ENCODE measurements at regions of chr5 and their contacts with region 1.

Region 1: GRCh38 chr5:68215208-68215897 is at the start of gene PIK3R1:
- DNase-seq: peak; percentile 84 to 96 (median 91)
- ATAC-seq: peak; percentile 78
- H3K4me3 ChIP-seq: peak within 1 kb of the TSS; percentile 81 to 93
- H3K4me3 Mint-ChIP-seq: peak within 1 kb of the TSS; percentile 87
- H3K27ac ChIP-seq: peak within 1 kb of the TSS; percentile 83 to 94
- H3K27ac Mint-ChIP-seq: peak within 1 kb of the TSS; percentile 96
- H3K4me1 ChIP-seq: peaks cover 35% of the 10 kb centered on the region
- H3K4me1 Mint-ChIP-seq: peaks cover 46% of the 10 kb centered on the region
- H3K27me3 ChIP-seq: no peaks in the 10 kb centered on the region
- H3K27me3 Mint-ChIP-seq: no peaks in the 10 kb centered on the region
- CTCF ChIP-seq: no peak
- total RNA-seq, gene PIK3R1: 461 to 470 TPM

Region 2: GRCh38 chr5:67003935-67004729 is 1211.2 kb before region 1 on chr5:
- CTCF ChIA-PET with region 1: no interaction called
- POLR2A ChIA-PET with region 1: interaction called, 7 read pairs
- intact Hi-C with region 1: loop called (anchors 1 to 5 kb)
- DNase-seq: peak; percentile 70 to 93 (median 87)
- ATAC-seq: peak; percentile 78
- H3K4me3 ChIP-seq: peak overlapping the region; percentile 75 to 85
- H3K4me3 Mint-ChIP-seq: peak overlapping the region; percentile 95
- H3K27ac ChIP-seq: peak overlapping the region; percentile 59 to 75
- H3K27ac Mint-ChIP-seq: peak overlapping the region; percentile 98
- H3K4me1 ChIP-seq: peaks cover 36% of the 10 kb centered on the region
- H3K4me1 Mint-ChIP-seq: peaks cover 52% of the 10 kb centered on the region
- H3K27me3 ChIP-seq: no peaks in the 10 kb centered on the region
- H3K27me3 Mint-ChIP-seq: no peaks in the 10 kb centered on the region
- CTCF ChIP-seq: no peak

Region 3: DNA sequence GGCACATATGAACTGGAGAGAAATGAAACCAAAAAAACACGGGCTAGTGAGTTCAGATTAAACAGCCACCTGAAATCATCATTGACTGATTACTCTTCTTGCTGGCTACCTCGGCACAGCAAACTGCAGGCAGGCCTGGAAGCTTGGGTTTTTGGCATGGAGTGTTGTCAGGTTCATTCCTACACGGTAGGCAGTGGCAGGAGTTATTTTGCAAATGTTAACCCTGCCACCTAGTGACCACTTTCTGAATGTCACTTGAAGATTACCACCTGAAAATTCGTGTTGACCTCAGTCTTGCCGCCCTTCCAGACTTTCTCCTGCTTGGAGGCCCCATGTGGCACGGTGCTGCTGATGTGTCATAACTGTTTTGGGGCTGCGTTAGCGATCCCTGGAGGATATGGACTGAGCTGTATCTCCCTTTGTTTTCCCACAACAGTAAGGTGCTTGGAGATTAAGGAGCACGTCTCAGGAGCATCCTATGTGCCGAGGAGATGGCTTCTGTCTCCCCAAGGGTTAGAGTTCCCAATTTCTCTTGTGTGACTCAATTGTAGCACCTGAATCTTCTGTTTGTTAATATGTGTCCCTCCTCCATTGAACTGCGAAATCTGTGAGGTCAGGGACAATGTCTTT is 1006.1 kb before region 1 on chr5:
- CTCF ChIA-PET with region 1: no interaction called
- POLR2A ChIA-PET with region 1: interaction called, 5 read pairs
- intact Hi-C with region 1: loop called in 1 of 2 experiments (anchors 5 kb)
- DNase-seq: peak; percentile 12 to 84 (median 61)
- ATAC-seq: peak; percentile 51
- H3K4me3 ChIP-seq: no peak overlapping the region
- H3K4me3 Mint-ChIP-seq: peak overlapping the region; percentile 13
- H3K27ac ChIP-seq: no peak overlapping the region
- H3K27ac Mint-ChIP-seq: peak overlapping the region; percentile 86
- H3K4me1 ChIP-seq: peaks cover 49% of the 10 kb centered on the region
- H3K4me1 Mint-ChIP-seq: peaks cover 58% of the 10 kb centered on the region
- H3K27me3 ChIP-seq: no peaks in the 10 kb centered on the region
- H3K27me3 Mint-ChIP-seq: no peaks in the 10 kb centered on the region
- CTCF ChIP-seq: peak; percentile 81

Region 4: DNA sequence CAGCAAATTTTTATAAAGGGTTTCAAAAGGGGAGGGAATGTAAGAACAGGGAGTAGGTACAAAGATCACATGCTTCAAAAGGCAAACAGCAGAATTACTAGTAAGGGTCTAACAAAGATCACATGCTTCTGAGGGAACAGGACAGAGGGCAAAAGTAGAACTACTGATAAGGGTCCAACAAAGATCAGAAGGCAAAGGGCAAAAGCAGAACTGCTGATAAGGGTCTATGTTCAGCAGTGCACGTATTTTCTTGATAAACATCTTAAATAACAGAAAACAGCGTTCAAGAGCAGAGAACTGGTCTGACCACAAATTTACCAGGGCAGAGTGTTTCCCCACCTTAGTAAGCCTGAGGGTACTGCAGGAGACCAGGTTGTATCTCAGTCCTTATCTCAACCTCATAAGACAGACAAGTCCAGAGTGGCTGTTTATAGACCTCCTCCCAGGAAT is 469.2 kb before region 1 on chr5:
- CTCF ChIA-PET with region 1: no interaction called
- POLR2A ChIA-PET with region 1: no interaction called
- intact Hi-C with region 1: no loop called
- DNase-seq: no peak
- ATAC-seq: no peak
- H3K4me3 ChIP-seq: no peak overlapping the region
- H3K4me3 Mint-ChIP-seq: no peak overlapping the region
- H3K27ac ChIP-seq: no peak overlapping the region
- H3K27ac Mint-ChIP-seq: no peak overlapping the region
- H3K4me1 ChIP-seq: no peaks in the 10 kb centered on the region
- H3K4me1 Mint-ChIP-seq: no peaks in the 10 kb centered on the region
- H3K27me3 ChIP-seq: no peaks in the 10 kb centered on the region
- H3K27me3 Mint-ChIP-seq: no peaks in the 10 kb centered on the region
- CTCF ChIP-seq: no peak

Region 5: GRCh38 chr5:68279984-68280383 is 64.6 kb after region 1 on chr5:
- CTCF ChIA-PET with region 1: interaction called, 3 read pairs
- POLR2A ChIA-PET with region 1: interaction called, 8 read pairs
- intact Hi-C with region 1: loop called (anchors 2 to 5 kb)
- DNase-seq: peak in 6 of 9 experiments; percentile 30 to 91 (median 56)
- ATAC-seq: peak; percentile 89
- H3K4me3 ChIP-seq: peak overlapping the region; percentile 56
- H3K4me3 Mint-ChIP-seq: peak overlapping the region; percentile 86
- H3K27ac ChIP-seq: peak overlapping the region; percentile 68 to 74
- H3K27ac Mint-ChIP-seq: peak overlapping the region; percentile 95
- H3K4me1 ChIP-seq: peaks cover 59% of the 10 kb centered on the region
- H3K4me1 Mint-ChIP-seq: peaks cover 84% of the 10 kb centered on the region
- H3K27me3 ChIP-seq: no peaks in the 10 kb centered on the region
- H3K27me3 Mint-ChIP-seq: no peaks in the 10 kb centered on the region
- CTCF ChIP-seq: no peak

Region 6: DNA sequence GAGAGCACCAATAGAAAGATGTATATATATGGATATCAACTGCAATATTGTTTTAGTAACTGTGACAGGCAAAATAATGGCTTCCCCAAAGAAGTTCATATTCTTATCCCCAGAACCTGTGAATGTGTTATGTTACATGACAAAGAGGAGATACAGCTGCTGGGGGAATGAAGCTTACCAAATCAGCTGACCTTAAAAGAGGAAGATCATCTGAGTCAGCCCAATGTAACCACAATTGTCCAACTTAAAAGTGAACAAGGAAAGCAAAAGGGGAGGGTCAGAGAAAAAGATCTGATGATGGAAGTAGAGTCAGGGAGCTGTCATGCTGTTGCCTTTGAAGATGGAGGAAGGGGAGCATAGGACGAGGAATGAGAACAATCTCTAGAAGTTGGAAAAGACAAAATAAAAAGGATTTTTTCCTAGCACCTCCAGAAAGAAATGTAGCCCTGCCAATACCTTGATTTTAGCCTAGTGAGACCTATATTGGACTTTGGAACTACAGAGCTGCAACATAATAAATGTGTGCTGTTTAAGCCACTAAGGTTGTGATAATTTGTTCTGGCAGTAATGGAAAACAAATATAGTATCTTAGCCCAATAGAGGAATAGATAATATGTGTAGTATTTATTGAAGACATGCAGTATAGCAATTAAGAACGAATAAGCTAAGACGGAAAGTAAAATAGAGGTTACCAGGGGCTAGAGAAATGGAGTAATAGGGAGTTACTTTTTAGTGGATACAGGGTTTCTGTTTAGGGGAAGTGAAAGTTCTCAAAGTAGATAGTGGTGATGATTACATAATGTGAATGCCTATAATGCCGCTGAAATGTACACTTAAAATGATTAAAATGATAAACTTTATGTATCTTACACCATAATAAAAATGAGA is 116.1 kb after region 1 on chr5:
- CTCF ChIA-PET with region 1: no interaction called
- POLR2A ChIA-PET with region 1: no interaction called
- intact Hi-C with region 1: no loop called
- DNase-seq: peak in 1 of 9 experiments; percentile 23
- ATAC-seq: no peak
- H3K4me3 ChIP-seq: no peak overlapping the region
- H3K4me3 Mint-ChIP-seq: no peak overlapping the region
- H3K27ac ChIP-seq: no peak overlapping the region
- H3K27ac Mint-ChIP-seq: no peak overlapping the region
- H3K4me1 ChIP-seq: no peaks in the 10 kb centered on the region
- H3K4me1 Mint-ChIP-seq: no peaks in the 10 kb centered on the region
- H3K27me3 ChIP-seq: no peaks in the 10 kb centered on the region
- H3K27me3 Mint-ChIP-seq: no peaks in the 10 kb centered on the region
- CTCF ChIP-seq: no peak

Region 7: DNA sequence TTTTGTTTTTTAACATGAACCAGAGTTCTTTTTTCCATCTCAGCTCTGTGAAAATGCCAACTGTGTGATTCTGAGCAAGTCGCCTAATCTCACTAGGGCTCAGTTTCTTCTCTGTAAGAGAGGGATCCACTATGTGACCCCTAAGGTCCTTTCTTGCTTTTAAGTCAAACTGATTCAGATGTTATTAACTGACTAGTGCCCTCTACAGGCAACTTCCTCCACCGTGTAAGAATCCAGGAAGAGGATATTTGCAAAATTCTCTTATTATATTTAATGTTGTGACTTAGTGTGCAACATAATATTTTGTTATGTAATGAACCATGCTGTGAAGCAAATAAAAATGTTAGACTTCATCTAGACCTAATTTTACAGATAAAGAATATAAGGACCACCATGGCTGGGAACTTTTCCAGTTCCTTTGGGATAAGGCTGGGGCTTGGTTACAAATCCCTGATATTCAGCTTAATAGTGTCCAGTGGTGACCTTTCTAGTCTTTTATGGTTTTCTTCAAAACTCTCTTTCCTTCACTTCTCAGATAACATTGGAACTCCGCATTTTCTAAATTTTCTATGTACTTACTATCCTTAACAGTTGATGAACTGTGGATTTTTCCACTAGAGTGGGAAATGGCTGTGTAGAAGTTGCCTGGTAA is 244.9 kb after region 1 on chr5:
- CTCF ChIA-PET with region 1: no interaction called
- POLR2A ChIA-PET with region 1: no interaction called
- intact Hi-C with region 1: loop called in 1 of 2 experiments (anchors 10 kb)
- DNase-seq: peak in 8 of 9 experiments; percentile 13 to 81 (median 42)
- ATAC-seq: peak; percentile 55
- H3K4me3 ChIP-seq: no peak overlapping the region
- H3K4me3 Mint-ChIP-seq: no peak overlapping the region
- H3K27ac ChIP-seq: no peak overlapping the region
- H3K27ac Mint-ChIP-seq: peak overlapping the region; percentile 19
- H3K4me1 ChIP-seq: peaks cover 13% of the 10 kb centered on the region
- H3K4me1 Mint-ChIP-seq: peaks cover 18% of the 10 kb centered on the region
- H3K27me3 ChIP-seq: no peaks in the 10 kb centered on the region
- H3K27me3 Mint-ChIP-seq: no peaks in the 10 kb centered on the region
- CTCF ChIP-seq: peak; percentile 80

Measured in CD8-positive, alpha-beta T cell (primary cell).